ENCODE measurements at regions of chr12 and their contacts with region 1.

Region 1: GRCh38 chr12:9169979-9170634 is 38.1 kb downstream of the PZP start:
- DNase-seq: no peak
- H3K4me3 ChIP-seq: no peak overlapping the region
- H3K27ac ChIP-seq: no peak overlapping the region
- H3K4me1 ChIP-seq: no peaks in the 10 kb centered on the region
- H3K27me3 ChIP-seq: peaks cover 3% of the 10 kb centered on the region
- CTCF ChIP-seq: no peak

Region 2: GRCh38 chr12:9273276-9273675 is 103.2 kb after region 1 on chr12:
- dilution Hi-C with region 1: loop called (anchors 25 kb)
- DNase-seq: no peak
- H3K4me3 ChIP-seq: no peak overlapping the region
- H3K27ac ChIP-seq: no peak overlapping the region
- H3K4me1 ChIP-seq: peaks cover 6% of the 10 kb centered on the region
- H3K27me3 ChIP-seq: no peaks in the 10 kb centered on the region
- CTCF ChIP-seq: no peak

Measured in keratinocyte (primary cell).